ENCODE measurements at regions of chr13 and their contacts with region 1.

Region 1: DNA sequence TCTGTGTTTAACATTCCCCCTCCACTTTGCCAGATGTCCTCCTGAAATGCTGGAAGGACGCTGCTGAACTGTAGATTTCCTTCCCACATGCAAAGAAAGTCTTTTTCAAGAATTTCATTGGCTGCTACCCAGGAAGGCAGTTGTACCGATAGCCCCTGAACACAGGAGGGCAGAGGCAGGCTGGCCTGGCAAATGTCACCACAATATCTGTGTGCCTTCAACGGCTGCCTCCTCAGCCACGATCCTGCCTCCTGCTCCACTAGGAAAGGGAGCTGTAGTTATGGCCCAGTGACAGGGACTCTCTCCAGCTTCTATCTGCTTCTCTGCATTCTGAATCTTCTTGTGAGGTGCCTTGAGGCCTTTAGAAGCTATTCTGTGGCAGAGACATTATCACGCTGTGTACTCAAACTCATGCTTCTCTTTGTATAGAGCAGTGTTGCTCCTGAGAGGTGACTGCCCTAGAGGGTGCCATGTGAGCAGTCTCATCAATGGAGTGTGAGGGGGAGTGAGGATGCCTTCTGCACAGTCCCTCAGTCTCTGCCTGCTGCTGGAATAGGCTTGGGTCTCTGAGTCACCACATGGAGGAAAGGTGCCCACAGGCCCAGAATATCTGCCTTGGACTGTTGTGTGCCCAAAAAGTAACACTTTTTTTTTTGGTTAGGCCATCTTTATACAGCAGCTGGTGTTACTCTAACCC is 279.8 kb downstream of the DNAJC15 start:
- DNase-seq: peak; percentile 72 to 75
- H3K4me3 ChIP-seq: no peak overlapping the region
- H3K4me3 Mint-ChIP-seq: no peak overlapping the region
- H3K27ac Mint-ChIP-seq: no peak overlapping the region
- H3K4me1 ChIP-seq: no peaks in the 10 kb centered on the region
- H3K4me1 Mint-ChIP-seq: peaks cover 22% of the 10 kb centered on the region
- H3K27me3 ChIP-seq: no peaks in the 10 kb centered on the region
- H3K27me3 Mint-ChIP-seq: no peaks in the 10 kb centered on the region
- CTCF ChIP-seq: peak; percentile 59 to 85

Region 2: GRCh38 chr13:42011691-42012391 is 1291.3 kb before region 1 on chr13:
- CTCF ChIA-PET with region 1: no interaction called
- POLR2A ChIA-PET with region 1: no interaction called
- intact Hi-C with region 1: no loop called
- DNase-seq: peak; percentile 45 to 53
- H3K4me3 ChIP-seq: peak overlapping the region; percentile 35
- H3K4me3 Mint-ChIP-seq: peak overlapping the region; percentile 69
- H3K27ac Mint-ChIP-seq: peak overlapping the region; percentile 8
- H3K4me1 ChIP-seq: 0 out of 2 replicates have a peak, but pooled peaks cover 7% of the 10 kb centered on the region
- H3K4me1 Mint-ChIP-seq: peaks cover 6% of the 10 kb centered on the region
- H3K27me3 ChIP-seq: no peaks in the 10 kb centered on the region
- H3K27me3 Mint-ChIP-seq: no peaks in the 10 kb centered on the region
- CTCF ChIP-seq: no peak

Region 3: GRCh38 chr13:43331672-43332071 is 28.5 kb after region 1 on chr13:
- CTCF ChIA-PET with region 1: no interaction called
- POLR2A ChIA-PET with region 1: no interaction called
- intact Hi-C with region 1: no loop called
- DNase-seq: no peak
- H3K4me3 ChIP-seq: no peak overlapping the region
- H3K4me3 Mint-ChIP-seq: no peak overlapping the region
- H3K27ac Mint-ChIP-seq: no peak overlapping the region
- H3K4me1 ChIP-seq: no peaks in the 10 kb centered on the region
- H3K4me1 Mint-ChIP-seq: no peaks in the 10 kb centered on the region
- H3K27me3 ChIP-seq: no peaks in the 10 kb centered on the region
- H3K27me3 Mint-ChIP-seq: no peaks in the 10 kb centered on the region
- CTCF ChIP-seq: no peak

Region 4: DNA sequence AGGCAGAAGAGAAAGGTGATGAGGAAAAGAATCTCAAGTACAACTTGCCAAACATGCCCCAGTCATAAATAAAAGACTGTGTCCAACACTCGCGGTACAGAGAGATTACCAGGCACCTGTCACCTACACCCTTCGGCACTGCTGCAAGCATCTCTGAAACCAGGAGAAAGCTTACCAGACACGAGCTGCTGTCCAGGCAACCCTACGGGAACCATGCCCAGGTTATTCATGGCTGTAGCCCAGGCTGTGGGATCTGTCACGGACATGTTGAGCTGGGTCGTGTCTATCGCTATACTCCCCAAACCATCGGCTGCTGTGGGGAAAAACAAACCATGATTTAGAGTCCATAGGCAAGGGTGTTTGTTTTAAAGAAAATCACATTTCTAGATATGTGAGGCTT is 108.6 kb after region 1 on chr13:
- CTCF ChIA-PET with region 1: no interaction called
- POLR2A ChIA-PET with region 1: no interaction called
- intact Hi-C with region 1: loop called (anchors 5 kb)
- DNase-seq: no peak
- H3K4me3 ChIP-seq: no peak overlapping the region
- H3K4me3 Mint-ChIP-seq: no peak overlapping the region
- H3K27ac Mint-ChIP-seq: no peak overlapping the region
- H3K4me1 ChIP-seq: peaks cover 12% of the 10 kb centered on the region
- H3K4me1 Mint-ChIP-seq: peaks cover 7% of the 10 kb centered on the region
- H3K27me3 ChIP-seq: no peaks in the 10 kb centered on the region
- H3K27me3 Mint-ChIP-seq: no peaks in the 10 kb centered on the region
- CTCF ChIP-seq: no peak

Region 5: DNA sequence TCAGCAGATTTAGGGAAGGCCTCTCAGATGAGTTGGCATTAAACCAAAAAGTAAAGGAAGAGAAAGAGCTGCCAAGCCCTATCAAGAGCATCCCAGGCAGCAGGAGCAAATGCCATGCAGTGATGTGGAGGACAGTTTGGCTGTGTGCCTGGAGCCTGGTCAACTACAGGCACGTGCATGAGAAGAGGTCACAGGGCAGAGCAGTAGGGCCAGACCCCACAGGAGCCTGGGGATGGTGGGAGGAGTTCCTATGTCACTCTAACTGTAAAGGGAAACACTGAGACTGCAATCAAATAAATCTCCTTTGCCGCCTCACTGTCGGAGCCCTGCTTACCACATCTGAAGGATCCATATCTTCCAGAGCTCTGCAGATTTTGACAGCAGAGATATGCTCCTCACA is 243.1 kb after region 1 on chr13:
- CTCF ChIA-PET with region 1: no interaction called
- POLR2A ChIA-PET with region 1: no interaction called
- intact Hi-C with region 1: loop called (anchors 10 kb)
- DNase-seq: no peak
- H3K4me3 ChIP-seq: no peak overlapping the region
- H3K4me3 Mint-ChIP-seq: no peak overlapping the region
- H3K27ac Mint-ChIP-seq: no peak overlapping the region
- H3K4me1 ChIP-seq: peaks cover 84% of the 10 kb centered on the region
- H3K4me1 Mint-ChIP-seq: peaks cover 7% of the 10 kb centered on the region
- H3K27me3 ChIP-seq: no peaks in the 10 kb centered on the region
- H3K27me3 Mint-ChIP-seq: no peaks in the 10 kb centered on the region
- CTCF ChIP-seq: no peak

Region 6: GRCh38 chr13:43737392-43737923 is 434.3 kb after region 1 on chr13:
- CTCF ChIA-PET with region 1: no interaction called
- POLR2A ChIA-PET with region 1: no interaction called
- intact Hi-C with region 1: loop called (anchors 5 kb)
- DNase-seq: no peak
- H3K4me3 ChIP-seq: no peak overlapping the region
- H3K4me3 Mint-ChIP-seq: no peak overlapping the region
- H3K27ac Mint-ChIP-seq: no peak overlapping the region
- H3K4me1 ChIP-seq: no peaks in the 10 kb centered on the region
- H3K4me1 Mint-ChIP-seq: no peaks in the 10 kb centered on the region
- H3K27me3 ChIP-seq: no peaks in the 10 kb centered on the region
- H3K27me3 Mint-ChIP-seq: no peaks in the 10 kb centered on the region
- CTCF ChIP-seq: no peak

Region 7: DNA sequence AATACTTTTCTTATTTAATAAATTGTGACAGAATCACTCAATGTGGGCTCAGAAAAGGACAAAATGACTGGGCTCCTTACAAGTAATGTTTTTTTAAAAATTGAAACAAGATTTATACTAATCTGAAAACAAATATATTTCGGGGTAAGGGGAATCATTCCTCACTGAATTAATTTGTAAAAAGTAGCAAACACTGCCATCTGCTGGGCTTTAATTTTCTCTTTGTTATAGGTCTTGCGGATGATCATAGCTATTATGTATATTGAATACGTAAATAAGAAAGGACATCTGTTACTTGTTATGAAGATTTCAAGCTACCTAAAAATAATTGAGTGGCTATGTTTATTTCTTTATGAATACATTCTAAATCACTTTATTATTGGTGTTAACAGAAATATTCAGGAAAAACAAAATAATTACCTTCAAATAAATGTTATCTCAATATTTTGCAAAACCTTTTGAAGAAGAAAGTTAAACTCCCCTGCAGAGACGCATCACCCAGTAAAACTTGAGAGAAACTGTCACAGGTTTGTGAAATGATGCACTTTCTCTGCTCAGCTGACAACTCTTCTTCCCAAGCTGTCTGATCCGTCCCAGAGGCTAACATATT is 501.4 kb after region 1 on chr13:
- CTCF ChIA-PET with region 1: interaction called, 8 read pairs
- POLR2A ChIA-PET with region 1: no interaction called
- intact Hi-C with region 1: loop called (anchors 1 kb)
- DNase-seq: peak in 1 of 2 experiments; percentile 72
- H3K4me3 ChIP-seq: no peak overlapping the region
- H3K4me3 Mint-ChIP-seq: no peak overlapping the region
- H3K27ac Mint-ChIP-seq: no peak overlapping the region
- H3K4me1 ChIP-seq: peaks cover 25% of the 10 kb centered on the region
- H3K4me1 Mint-ChIP-seq: peaks cover 17% of the 10 kb centered on the region
- H3K27me3 ChIP-seq: no peaks in the 10 kb centered on the region
- H3K27me3 Mint-ChIP-seq: no peaks in the 10 kb centered on the region
- CTCF ChIP-seq: peak; percentile 48 to 67